IMR-90 (cell line): ENCODE measurements at regions of chr20 and their contacts with region 1.

Region 1: DNA sequence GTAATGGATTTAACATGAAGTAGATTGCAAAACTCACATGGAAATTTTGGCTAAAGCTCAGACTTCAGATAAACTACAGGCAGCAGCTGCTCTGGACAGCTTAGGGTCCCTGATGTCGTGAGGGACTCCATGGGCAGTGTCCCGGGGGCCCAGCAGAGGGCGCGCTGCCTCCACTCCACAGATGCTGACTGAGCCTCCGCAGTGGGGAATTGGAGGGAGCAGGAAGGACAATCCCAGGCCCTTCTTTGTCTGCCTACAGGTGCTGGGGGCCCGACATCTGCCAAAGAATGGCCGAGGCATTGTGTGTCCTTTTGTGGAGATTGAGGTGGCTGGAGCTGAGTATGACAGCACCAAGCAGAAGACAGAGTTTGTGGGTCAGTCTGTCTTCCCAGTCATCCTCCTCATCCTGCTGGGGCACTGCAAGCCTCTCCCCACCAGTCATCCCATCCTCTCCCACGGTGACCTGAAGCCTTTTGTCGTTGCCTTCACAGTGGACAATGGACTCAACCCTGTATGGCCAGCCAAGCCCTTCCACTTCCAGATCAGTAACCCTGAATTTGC is 35.9 kb downstream of the PLCG1 start:
- DNase-seq: peak; percentile 80
- ATAC-seq: peak; percentile 70
- H3K4me3 ChIP-seq: no peak overlapping the region
- H3K27ac ChIP-seq: no peak overlapping the region; the same call in 1 of the 2 replicates
- H3K4me1 ChIP-seq: peaks cover 34% of the 10 kb centered on the region
- H3K27me3 ChIP-seq: no peaks in the 10 kb centered on the region
- CTCF ChIP-seq: peak; percentile 98
- POLR2A ChIP-seq: peak; percentile 47; the same call in 1 of the 2 replicates
- RAD21 ChIP-seq: peak; percentile 97

Region 2: DNA sequence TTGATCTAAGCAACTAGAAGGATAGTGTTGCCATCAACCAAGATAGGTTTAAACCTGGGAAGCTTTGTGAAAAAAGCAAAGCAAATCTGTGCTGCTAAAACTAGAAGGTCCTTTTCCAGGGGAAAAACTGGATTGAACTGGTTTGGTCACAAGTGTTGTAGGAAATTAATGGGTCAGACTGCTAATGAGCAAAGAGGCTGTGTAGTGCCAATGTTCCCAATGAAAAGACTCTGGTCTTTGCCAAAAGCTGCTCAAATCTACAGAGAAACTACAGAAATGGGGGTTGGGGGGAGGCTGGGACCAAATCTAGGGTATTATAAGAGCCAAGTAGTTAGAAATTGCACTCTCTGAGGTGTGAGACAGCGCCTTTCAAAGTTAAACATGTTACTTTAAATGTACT is 49.1 kb after region 1 on chr20:
- CTCF ChIA-PET with region 1: interaction called, 12 read pairs
- POLR2A ChIA-PET with region 1: no interaction called
- dilution Hi-C with region 1: no loop called
- in situ Hi-C with region 1: loop called (anchors 5 kb)
- intact Hi-C with region 1: loop called (anchors 2 kb)
- DNase-seq: no peak
- ATAC-seq: peak; percentile 21; the same call in 1 of the 2 replicates
- H3K4me3 ChIP-seq: no peak overlapping the region
- H3K27ac ChIP-seq: peak overlapping the region; percentile 12; the same call in 1 of the 2 replicates
- H3K4me1 ChIP-seq: peaks cover 9% of the 10 kb centered on the region
- H3K27me3 ChIP-seq: no peaks in the 10 kb centered on the region
- CTCF ChIP-seq: no peak
- POLR2A ChIP-seq: no peak
- RAD21 ChIP-seq: no peak

Region 3: GRCh38 chr20:41317536-41318270 is 144.5 kb after region 1 on chr20 and contains the start of gene ZHX3:
- CTCF ChIA-PET with region 1: interaction called, 3 read pairs
- POLR2A ChIA-PET with region 1: no interaction called
- dilution Hi-C with region 1: no loop called
- in situ Hi-C with region 1: no loop called
- intact Hi-C with region 1: loop called (anchors 5 kb)
- DNase-seq: peak; percentile 94
- ATAC-seq: peak; percentile 94
- H3K4me3 ChIP-seq: peak within 1 kb of the TSS; percentile 55
- H3K27ac ChIP-seq: peak within 1 kb of the TSS; percentile 97
- H3K4me1 ChIP-seq: peaks cover 4% of the 10 kb centered on the region
- H3K27me3 ChIP-seq: no peaks in the 10 kb centered on the region
- CTCF ChIP-seq: no peak
- POLR2A ChIP-seq: no peak
- RAD21 ChIP-seq: no peak
- total RNA-seq, gene ZHX3: 28.0 and 28.3 TPM in 2 replicates

Region 4: GRCh38 chr20:41395667-41396664 is 222.7 kb after region 1 on chr20:
- CTCF ChIA-PET with region 1: no interaction called
- POLR2A ChIA-PET with region 1: no interaction called
- dilution Hi-C with region 1: no loop called
- in situ Hi-C with region 1: no loop called
- intact Hi-C with region 1: loop called (anchors 5 kb)
- DNase-seq: peak; percentile 10
- ATAC-seq: peak; percentile 41
- H3K4me3 ChIP-seq: no peak overlapping the region
- H3K27ac ChIP-seq: no peak overlapping the region
- H3K4me1 ChIP-seq: peaks cover 11% of the 10 kb centered on the region; the same call in 1 of the 2 replicates
- H3K27me3 ChIP-seq: no peaks in the 10 kb centered on the region
- CTCF ChIP-seq: no peak
- POLR2A ChIP-seq: no peak
- RAD21 ChIP-seq: no peak

Region 5: DNA sequence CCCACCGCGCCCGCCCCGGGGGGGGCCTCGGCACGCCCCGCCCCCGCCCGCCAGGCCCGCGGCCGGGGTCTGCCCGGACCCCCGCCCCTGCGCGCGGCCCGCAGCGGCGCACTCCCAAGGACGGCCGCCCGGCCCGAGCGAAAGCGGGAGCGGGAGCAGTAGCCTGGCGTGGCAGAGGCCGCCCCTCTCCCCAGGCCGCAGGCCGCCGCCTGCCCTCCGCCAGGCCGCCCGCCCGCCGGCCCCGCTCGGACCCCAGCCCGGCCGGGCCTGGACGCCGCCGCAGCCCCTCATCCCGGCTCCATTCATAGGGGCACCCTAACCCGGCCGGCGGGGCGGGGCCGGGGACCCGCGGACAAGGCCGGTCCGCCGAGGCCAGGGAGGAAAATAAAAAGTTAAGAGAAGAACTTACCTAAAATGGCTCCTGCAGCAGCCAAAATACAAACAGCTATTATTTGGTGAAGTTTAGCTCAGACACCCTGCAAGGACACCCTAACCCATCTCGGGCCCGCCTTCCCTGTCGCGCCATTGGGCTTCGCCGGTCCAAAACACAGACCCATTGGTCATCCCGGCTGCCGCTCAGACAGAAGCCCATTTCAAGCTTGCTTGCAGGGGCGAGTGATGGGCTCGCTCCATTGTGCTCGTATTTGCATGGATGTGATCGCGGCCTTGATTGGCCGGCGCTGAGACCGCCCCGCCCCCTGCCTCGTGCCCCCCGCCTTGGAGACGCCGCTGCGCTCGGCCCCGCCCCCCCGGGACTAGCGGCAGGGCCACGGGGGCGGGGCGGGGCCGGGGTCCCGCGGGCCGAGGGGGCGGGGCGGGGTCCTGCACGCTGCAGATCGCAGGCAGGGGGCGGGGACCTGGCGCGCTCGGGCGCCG is 444.9 kb after region 1 on chr20 and contains the start of gene CHD6:
- CTCF ChIA-PET with region 1: no interaction called
- POLR2A ChIA-PET with region 1: no interaction called
- dilution Hi-C with region 1: no loop called
- in situ Hi-C with region 1: loop called (anchors 25 kb)
- intact Hi-C with region 1: no loop called
- DNase-seq: peak; percentile 99
- ATAC-seq: peak; percentile 98
- H3K4me3 ChIP-seq: peak within 1 kb of the TSS; percentile 85
- H3K27ac ChIP-seq: peak within 1 kb of the TSS; percentile 59
- H3K4me1 ChIP-seq: peaks cover 4% of the 10 kb centered on the region
- H3K27me3 ChIP-seq: peaks cover 7% of the 10 kb centered on the region; the same call in 1 of the 2 replicates
- CTCF ChIP-seq: no peak
- POLR2A ChIP-seq: peak; percentile 39; the same call in 1 of the 2 replicates
- RAD21 ChIP-seq: no peak
- total RNA-seq, gene CHD6: 26.7 and 31.7 TPM in 2 replicates

Region 6: GRCh38 chr20:42276718-42277602 is 1103.7 kb after region 1 on chr20:
- CTCF ChIA-PET with region 1: no interaction called
- POLR2A ChIA-PET with region 1: no interaction called
- dilution Hi-C with region 1: no loop called
- in situ Hi-C with region 1: no loop called
- intact Hi-C with region 1: no loop called
- DNase-seq: no peak
- ATAC-seq: no peak
- H3K4me3 ChIP-seq: no peak overlapping the region
- H3K27ac ChIP-seq: no peak overlapping the region
- H3K4me1 ChIP-seq: no peaks in the 10 kb centered on the region
- H3K27me3 ChIP-seq: no peaks in the 10 kb centered on the region
- CTCF ChIP-seq: no peak
- POLR2A ChIP-seq: no peak
- RAD21 ChIP-seq: no peak